ENCODE measurements at regions of chr2 and their contacts with region 1.

Region 1: GRCh38 chr2:220858101-220858500 is 714.0 kb downstream of the EPHA4 start:
- DNase-seq: no peak
- H3K4me3 ChIP-seq: no peak overlapping the region
- H3K27ac ChIP-seq: no peak overlapping the region
- H3K4me1 ChIP-seq: no peaks in the 10 kb centered on the region
- H3K27me3 ChIP-seq: no peaks in the 10 kb centered on the region
- CTCF ChIP-seq: no peak

Region 2: GRCh38 chr2:220569112-220569897 is 288.8 kb before region 1 on chr2:
- CTCF ChIA-PET with region 1: no interaction called
- POLR2A ChIA-PET with region 1: interaction called, 14 read pairs
- intact Hi-C with region 1: no loop called
- DNase-seq: no peak
- H3K4me3 ChIP-seq: no peak overlapping the region
- H3K27ac ChIP-seq: no peak overlapping the region
- H3K4me1 ChIP-seq: no peaks in the 10 kb centered on the region
- H3K27me3 ChIP-seq: no peaks in the 10 kb centered on the region
- CTCF ChIP-seq: no peak

Region 3: GRCh38 chr2:220708366-220708765 is 149.7 kb before region 1 on chr2:
- CTCF ChIA-PET with region 1: no interaction called
- POLR2A ChIA-PET with region 1: no interaction called
- intact Hi-C with region 1: no loop called
- DNase-seq: no peak
- H3K4me3 ChIP-seq: no peak overlapping the region
- H3K27ac ChIP-seq: no peak overlapping the region
- H3K4me1 ChIP-seq: no peaks in the 10 kb centered on the region
- H3K27me3 ChIP-seq: no peaks in the 10 kb centered on the region
- CTCF ChIP-seq: no peak

Measured in PC-9 (cell line).